Aorta (tissue), 5 donors: ENCODE measurements at regions of chr9 and their contacts with region 1.

Region 1: GRCh38 chr9:123544007-123544827 is 188.2 kb downstream of the CRB2 start:
- DNase-seq: no peak
- ATAC-seq: no peak
- H3K4me3 ChIP-seq: no peak overlapping the region
- H3K27ac ChIP-seq: no peak overlapping the region
- H3K4me1 ChIP-seq: no peaks in the 10 kb centered on the region
- H3K27me3 ChIP-seq: no peaks in the 10 kb centered on the region

Region 2: GRCh38 chr9:123150708-123151503 is 393.3 kb before region 1 on chr9:
- intact Hi-C with region 1: no loop called
- DNase-seq: no peak
- ATAC-seq: no peak
- H3K4me3 ChIP-seq: no peak overlapping the region
- H3K27ac ChIP-seq: no peak overlapping the region
- H3K4me1 ChIP-seq: no peaks in the 10 kb centered on the region
- H3K27me3 ChIP-seq: no peaks in the 10 kb centered on the region

Region 3: DNA sequence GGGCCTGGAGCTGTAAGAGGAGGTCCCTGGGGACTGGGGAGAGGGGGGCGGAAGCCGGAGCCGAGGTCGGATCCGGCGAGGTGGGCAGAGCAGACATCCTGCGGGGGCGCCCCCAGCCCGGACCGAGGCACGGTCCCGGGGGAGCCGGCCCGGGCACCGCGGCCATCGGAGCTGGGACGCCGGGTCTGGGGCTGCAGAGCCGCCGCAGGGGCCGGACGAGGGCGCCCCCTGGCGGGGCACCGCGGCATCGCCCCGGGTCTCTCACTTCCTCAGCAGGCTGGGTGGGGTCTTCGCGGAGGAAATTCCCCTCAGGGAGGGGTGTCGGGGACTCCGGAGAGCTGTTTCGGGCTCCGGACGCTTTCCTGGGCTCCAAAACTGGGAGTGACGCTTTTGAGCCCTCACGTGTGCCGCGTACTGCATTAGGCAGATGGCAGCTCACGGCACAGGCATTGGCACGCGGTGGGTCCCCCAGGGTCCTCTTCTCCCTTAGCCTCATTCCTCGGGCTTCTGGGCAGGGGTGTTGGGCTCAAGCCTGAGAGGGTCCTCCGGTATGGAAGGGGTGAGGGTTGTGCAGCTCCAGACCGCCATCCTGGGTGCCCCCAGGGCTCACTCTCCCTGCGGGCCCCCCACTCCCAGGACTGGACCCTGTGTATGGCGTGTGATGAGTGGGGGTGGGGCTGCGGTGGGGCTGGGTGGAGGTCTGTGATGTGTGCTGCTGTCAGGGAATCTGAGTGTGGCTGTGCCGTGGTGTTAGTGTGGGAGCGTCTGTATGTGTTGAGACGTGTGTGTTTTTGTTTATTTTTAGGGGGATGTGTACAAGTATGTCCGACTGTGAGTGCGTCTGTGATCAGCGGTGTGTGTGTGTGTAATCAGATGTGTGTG is 497.0 kb after region 1 on chr9:
- intact Hi-C with region 1: loop called in 1 of 2 experiments (anchors 5 kb)
- DNase-seq: peak; percentile 60 to 84
- ATAC-seq: peak; percentile 76
- H3K4me3 ChIP-seq: no peak overlapping the region
- H3K27ac ChIP-seq: no peak overlapping the region
- H3K4me1 ChIP-seq: no peaks in the 10 kb centered on the region
- H3K27me3 ChIP-seq: no peaks in the 10 kb centered on the region

Region 4: DNA sequence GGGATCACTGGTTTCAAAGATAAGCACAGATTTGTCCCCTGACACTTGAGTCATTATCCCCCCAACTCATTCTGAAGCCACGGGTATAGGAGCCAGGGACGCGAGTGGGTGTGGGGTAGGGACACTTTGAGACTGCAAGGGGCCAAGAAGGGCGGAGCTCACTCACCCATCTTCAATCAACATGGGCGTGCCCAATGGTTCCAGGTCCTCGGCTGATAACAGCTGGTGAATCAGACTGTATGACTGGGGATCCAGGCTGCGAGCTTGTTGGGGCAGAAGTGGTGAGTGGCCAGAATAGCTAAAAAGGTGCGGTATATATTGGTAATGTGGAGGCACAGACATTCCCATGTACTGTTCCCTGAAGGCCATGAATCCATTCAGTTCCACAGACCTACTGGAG is 993.7 kb after region 1 on chr9:
- intact Hi-C with region 1: loop called in 1 of 2 experiments (anchors 5 kb)
- DNase-seq: no peak
- ATAC-seq: no peak
- H3K4me3 ChIP-seq: no peak overlapping the region
- H3K27ac ChIP-seq: no peak overlapping the region
- H3K4me1 ChIP-seq: no peaks in the 10 kb centered on the region
- H3K27me3 ChIP-seq: no peaks in the 10 kb centered on the region